Gastrocnemius medialis (tissue), 4 donors: ENCODE measurements at regions of chrX and their contacts with region 1.

Region 1: DNA sequence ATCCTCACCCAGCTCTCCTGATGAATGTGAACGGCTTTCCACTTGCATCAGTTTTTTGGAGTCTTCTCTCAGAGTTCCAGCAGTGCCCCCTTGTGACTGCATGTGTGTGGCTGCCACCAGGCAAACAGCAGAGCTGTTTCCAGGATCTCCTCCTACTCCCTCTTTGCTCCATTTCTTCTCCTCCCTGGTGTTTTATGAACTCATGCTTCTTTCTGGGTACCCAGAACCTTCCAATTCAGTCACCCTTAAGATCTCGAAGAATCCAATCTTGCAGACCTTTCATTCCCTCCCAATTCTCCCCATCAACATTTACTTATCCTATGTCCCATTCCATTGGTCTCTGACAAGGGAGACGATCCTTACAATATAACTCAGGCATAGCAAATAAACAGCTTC is 6.8 kb upstream of the TCEANC start:
- DNase-seq: no peak
- ATAC-seq: no peak
- H3K4me3 ChIP-seq: no peak overlapping the region
- H3K27ac ChIP-seq: no peak overlapping the region
- H3K4me1 ChIP-seq: no peaks in the 10 kb centered on the region
- H3K27me3 ChIP-seq: peaks cover 0 to 5% (median 0%) of the 10 kb centered on the region in 3 donors
- CTCF ChIP-seq: peak in 3 of 5 experiments; percentile 18 to 38 (median 22)
- POLR2A ChIP-seq: no peak

Region 2: DNA sequence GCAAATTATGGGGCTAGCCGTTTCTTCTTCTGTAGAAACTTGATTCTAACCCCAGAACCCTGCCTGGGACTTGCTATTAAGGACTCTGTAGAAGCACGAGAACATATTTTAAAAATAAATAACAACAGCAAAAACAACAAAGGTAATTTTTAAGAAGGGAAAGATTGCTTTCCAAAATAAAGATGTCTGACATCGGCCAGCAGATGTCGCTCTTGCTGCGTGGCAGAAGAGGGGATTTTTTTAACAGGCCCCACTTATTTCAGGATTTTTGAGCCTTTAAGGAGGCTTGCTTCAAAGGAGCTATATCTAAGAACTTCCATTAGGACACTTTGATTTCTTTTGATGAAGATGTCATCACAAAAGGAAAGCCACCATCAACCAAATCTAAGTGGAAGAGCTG is 139.6 kb before region 1 on chrX:
- in situ Hi-C with region 1: loop called (anchors 5 to 25 kb)
- intact Hi-C with region 1: loop called (anchors 5 kb)
- DNase-seq: no peak
- ATAC-seq: no peak
- H3K4me3 ChIP-seq: no peak overlapping the region
- H3K27ac ChIP-seq: no peak overlapping the region
- H3K4me1 ChIP-seq: no peaks in the 10 kb centered on the region
- H3K27me3 ChIP-seq: no peaks in the 10 kb centered on the region
- CTCF ChIP-seq: peak; percentile 38 to 78 (median 51)
- POLR2A ChIP-seq: no peak

Region 3: GRCh38 chrX:13669246-13669737 is 23.1 kb after region 1 on chrX:
- in situ Hi-C with region 1: no loop called
- intact Hi-C with region 1: no loop called
- DNase-seq: no peak
- ATAC-seq: no peak
- H3K4me3 ChIP-seq: no peak overlapping the region
- H3K27ac ChIP-seq: no peak overlapping the region
- H3K4me1 ChIP-seq: no peaks in the 10 kb centered on the region
- H3K27me3 ChIP-seq: no peaks in the 10 kb centered on the region
- CTCF ChIP-seq: no peak
- POLR2A ChIP-seq: no peak